AG04450 (cell line): ENCODE measurements at regions of chr21 and their contacts with region 1.

Region 1: DNA sequence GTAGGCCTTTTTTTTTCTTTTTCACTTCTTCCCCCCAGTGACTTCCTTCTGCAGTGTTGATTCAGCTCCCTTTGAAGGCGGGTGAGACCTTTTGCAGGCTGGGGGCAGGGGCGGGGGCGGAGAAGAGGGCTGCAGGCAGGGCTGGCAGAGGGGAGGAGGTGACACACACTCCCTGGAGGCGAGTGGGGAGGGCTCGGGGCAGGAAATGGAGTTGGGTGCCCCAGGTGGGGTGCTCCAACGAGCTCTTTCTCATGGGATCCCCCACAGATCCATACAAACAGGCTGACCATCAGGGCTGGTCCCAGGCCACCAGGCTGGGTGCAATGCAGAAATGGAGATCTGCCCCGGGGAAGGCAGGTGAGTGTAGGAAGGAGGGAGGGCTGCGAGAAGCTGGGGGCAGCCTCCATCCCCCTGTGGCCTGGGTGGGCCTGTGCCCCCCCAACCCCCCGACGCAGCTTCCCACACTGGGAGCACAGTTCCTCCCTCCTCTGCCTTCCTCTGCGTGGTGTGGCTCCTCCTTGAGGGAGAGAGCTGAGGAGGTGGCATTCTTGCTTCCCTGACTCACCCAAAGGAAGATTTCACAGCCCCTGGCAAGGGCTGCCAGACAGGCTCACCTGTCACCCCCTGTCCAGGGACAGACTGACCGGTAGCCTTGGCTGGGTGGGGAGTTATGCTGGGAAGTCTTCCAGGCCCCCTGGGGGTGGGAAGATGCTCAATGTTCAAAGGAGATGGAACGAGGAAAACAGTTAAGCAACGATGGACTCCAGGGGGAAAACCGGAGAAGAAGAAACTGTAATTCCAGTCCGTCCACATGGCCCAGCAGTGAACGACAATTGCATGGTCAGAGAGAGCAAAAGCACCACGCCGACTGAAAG is 7.1 kb upstream of the ITGB2 start:
- DNase-seq: no peak
- H3K4me3 ChIP-seq: no peak overlapping the region
- H3K27ac ChIP-seq: peak overlapping the region; percentile 21
- H3K27me3 ChIP-seq: peaks cover 61% of the 10 kb centered on the region
- CTCF ChIP-seq: peak; percentile 26

Region 2: DNA sequence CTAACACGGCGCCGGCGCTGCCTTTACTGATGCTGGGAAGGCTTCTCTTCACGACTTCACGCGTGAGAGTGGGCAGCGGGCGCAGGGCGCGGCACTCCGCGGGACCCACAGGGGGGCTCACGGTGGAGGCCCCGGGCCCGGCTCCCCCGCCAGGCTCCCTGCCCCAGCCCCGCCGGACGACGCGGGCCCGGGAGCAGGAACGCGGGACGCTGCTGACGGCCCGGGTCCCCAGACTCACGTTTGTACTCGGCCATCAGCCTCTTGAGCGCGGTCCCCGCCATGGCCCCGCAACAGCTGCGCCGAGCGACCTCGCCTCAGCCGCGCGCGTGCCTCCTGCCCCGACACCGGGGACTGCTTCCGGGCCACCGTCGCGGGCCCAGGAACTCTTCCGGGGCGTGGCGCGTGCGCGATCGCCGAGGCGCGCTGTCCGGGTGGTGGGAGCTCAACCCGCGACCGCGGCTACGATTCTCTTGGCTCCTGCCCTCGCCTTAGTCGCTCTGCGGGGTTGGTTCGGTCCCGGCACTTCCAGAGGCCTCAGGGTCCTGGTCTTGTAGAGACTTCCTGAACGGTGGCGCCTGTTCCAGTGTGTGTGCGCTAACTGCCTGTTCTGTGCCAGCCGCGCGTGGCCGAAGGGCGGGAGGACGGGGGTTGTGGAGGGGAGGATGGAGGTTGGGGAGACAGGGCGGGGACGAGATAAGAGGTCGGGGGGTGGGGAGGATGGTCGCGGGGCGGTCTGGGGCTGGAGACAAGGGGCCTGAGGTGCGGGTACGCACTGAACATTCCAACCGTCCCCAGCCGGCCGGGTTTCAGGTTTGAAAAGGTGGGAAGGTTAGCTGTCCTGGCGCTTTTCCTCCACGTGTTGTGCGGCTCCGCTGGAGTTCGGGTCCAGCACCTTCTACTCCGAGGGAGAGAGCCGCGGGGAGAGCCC is 126.1 kb before region 1 on chr21 and contains the start of gene UBE2G2:
- CTCF ChIA-PET with region 1: interaction called, 22 read pairs
- POLR2A ChIA-PET with region 1: interaction called, 5 read pairs
- DNase-seq: no peak
- H3K4me3 ChIP-seq: peak within 1 kb of the TSS; percentile 87
- H3K27ac ChIP-seq: peak within 1 kb of the TSS; percentile 47
- H3K27me3 ChIP-seq: no peaks in the 10 kb centered on the region
- CTCF ChIP-seq: no peak
- polyA plus RNA-seq, gene UBE2G2: 60.9 and 62.2 TPM in 2 replicates

Region 3: GRCh38 chr21:44873356-44874239 is 54.2 kb before region 1 on chr21 and contains the start of gene PTTG1IP:
- CTCF ChIA-PET with region 1: interaction called, 6 read pairs
- POLR2A ChIA-PET with region 1: interaction called, 30 read pairs
- DNase-seq: peak; percentile 90
- H3K4me3 ChIP-seq: peak within 1 kb of the TSS; percentile 88
- H3K27ac ChIP-seq: peak within 1 kb of the TSS; percentile 68
- H3K27me3 ChIP-seq: no peaks in the 10 kb centered on the region
- CTCF ChIP-seq: no peak
- polyA plus RNA-seq, gene PTTG1IP: 240 and 249 TPM in 2 replicates